Activated CD4-positive, alpha-beta memory T cell treated with anti-CD3 and anti-CD28 coated beads for 36 hours (primary cell): ENCODE measurements at regions of chr17 and their contacts with region 1.

Region 1: DNA sequence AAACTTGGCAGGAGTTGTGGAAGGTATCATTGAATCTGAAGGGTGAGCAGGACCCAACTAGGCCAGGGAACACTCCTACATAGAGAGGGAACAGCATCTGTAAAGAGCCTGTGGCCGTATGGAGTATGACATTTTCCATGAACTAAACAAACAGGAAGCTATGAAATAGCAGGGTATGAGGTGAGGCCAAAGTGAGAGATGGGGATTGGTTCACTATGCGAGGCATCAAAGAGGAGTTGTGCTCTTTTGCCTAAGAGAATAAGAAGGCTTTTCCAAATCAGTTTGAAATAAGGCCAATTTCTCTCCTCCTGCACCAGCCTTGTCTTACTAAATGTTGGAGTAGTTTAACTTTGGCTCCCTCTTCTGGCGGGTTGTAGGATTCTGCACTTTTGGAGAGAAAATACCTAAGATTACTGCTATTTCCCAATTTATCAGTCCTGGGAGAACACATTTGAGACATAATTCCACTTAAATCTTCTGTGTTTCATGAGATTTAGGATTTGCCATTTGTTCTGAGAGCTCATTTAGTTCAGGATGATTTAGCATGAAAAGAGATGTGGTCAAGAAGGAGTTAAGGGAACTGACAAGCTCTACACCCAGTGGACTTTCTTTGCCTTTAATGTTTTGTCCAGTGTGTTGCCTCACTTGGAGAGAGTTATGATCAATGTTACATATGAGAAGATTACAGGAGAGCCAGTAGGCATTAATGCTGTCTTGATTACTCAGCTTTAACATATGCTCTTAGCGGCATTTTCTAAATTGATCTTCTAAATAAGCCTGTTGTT is 55.4 kb downstream of the TNRC6C start:
- DNase-seq: peak; percentile 50
- H3K4me3 Mint-ChIP-seq: no peak overlapping the region
- H3K27ac Mint-ChIP-seq: no peak overlapping the region
- H3K4me1 Mint-ChIP-seq: peaks cover 20% of the 10 kb centered on the region
- H3K27me3 Mint-ChIP-seq: no peaks in the 10 kb centered on the region

Region 2: GRCh38 chr17:77420804-77421629 is 592.9 kb before region 1 on chr17:
- CTCF ChIA-PET with region 1: no interaction called
- POLR2A ChIA-PET with region 1: no interaction called
- intact Hi-C with region 1: no loop called
- DNase-seq: peak; percentile 65
- H3K4me3 Mint-ChIP-seq: peak overlapping the region; percentile 49
- H3K27ac Mint-ChIP-seq: peak overlapping the region; percentile 69
- H3K4me1 Mint-ChIP-seq: peaks cover 48% of the 10 kb centered on the region
- H3K27me3 Mint-ChIP-seq: no peaks in the 10 kb centered on the region

Region 3: DNA sequence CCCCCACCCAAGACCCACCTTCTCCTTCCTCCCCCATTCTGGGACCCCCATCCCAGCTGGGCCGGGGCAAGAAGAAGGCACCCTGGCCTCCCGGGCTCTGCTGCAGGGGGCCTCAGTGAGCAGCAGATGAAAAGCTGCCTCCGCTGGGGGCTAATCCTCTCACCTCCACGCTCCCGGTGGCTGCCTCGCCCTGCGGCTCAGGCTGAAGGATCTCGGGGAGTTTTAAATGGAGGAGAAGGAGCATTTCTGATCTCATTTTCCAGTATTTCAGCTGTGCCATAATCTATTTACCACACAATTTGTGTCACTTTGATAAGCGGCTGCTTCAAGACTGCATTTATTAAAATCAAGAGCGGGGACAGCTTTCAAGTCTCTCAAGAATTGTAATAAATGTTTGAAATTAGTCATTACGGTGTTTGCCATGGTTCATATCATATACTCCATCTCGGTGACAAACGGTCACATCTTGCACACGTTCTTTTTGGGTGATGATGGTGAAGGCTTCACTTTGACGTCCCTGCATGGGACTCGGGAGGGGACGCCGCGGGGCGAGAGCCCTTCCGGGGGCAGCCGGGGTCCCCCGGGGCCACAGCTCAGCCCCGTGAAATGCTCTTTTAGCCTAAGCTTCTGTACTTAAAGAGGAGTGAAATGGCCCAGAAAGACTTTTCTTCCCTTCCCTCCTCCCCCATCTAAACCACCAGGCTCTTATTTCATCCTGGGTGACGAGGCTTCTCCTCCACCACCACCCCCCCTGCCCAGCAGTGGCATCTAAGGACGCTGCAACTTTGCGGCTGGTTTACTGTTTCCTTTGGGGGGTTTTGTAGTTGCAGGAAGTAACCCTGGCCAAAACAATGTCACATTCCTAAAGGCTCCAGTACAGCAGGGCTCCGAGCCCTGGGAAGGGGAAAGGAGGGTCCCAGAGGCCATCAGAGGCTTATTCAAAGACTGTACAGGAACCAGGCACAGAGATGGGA is 368.5 kb before region 1 on chr17:
- CTCF ChIA-PET with region 1: interaction called, 10 read pairs
- POLR2A ChIA-PET with region 1: no interaction called
- intact Hi-C with region 1: loop called (anchors 10 kb)
- DNase-seq: peak; percentile 85
- H3K4me3 Mint-ChIP-seq: peak overlapping the region; percentile 68
- H3K27ac Mint-ChIP-seq: peak overlapping the region; percentile 84
- H3K4me1 Mint-ChIP-seq: peaks cover 26% of the 10 kb centered on the region
- H3K27me3 Mint-ChIP-seq: no peaks in the 10 kb centered on the region

Region 4: GRCh38 chr17:77783991-77784820 is 229.7 kb before region 1 on chr17:
- CTCF ChIA-PET with region 1: interaction called, 18 read pairs
- POLR2A ChIA-PET with region 1: no interaction called
- intact Hi-C with region 1: no loop called
- DNase-seq: peak; percentile 86
- H3K4me3 Mint-ChIP-seq: peak overlapping the region; percentile 44
- H3K27ac Mint-ChIP-seq: peak overlapping the region; percentile 84
- H3K4me1 Mint-ChIP-seq: peaks cover 24% of the 10 kb centered on the region
- H3K27me3 Mint-ChIP-seq: no peaks in the 10 kb centered on the region

Region 5: DNA sequence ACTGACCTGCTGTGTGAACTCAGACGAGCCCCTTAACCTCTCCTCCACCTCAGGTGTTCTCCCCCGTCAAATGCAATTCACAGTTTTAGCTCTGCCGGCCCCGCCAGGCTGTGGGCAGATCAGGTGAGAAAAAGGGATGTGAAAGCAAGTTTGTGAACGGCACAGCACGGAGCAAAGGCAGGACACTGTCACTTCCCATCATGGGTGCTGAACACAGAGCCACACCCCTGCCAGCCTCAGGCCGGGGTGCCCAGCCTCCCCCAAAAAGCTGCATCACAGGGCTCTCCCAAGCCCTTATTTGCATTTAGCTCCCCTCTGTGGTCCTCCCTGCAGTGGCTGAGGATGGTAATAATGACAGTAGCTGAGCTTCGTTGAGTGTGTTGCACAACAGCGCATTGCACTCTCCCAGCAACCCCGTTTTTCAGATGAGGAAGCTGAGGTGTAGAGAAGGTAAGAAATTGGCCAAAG is 144.2 kb before region 1 on chr17:
- CTCF ChIA-PET with region 1: no interaction called
- POLR2A ChIA-PET with region 1: no interaction called
- intact Hi-C with region 1: no loop called
- DNase-seq: peak; percentile 37
- H3K4me3 Mint-ChIP-seq: no peak overlapping the region
- H3K27ac Mint-ChIP-seq: no peak overlapping the region
- H3K4me1 Mint-ChIP-seq: peaks cover 44% of the 10 kb centered on the region
- H3K27me3 Mint-ChIP-seq: no peaks in the 10 kb centered on the region

Region 6: GRCh38 chr17:77914385-77915254 is 99.3 kb before region 1 on chr17:
- CTCF ChIA-PET with region 1: interaction called, 5 read pairs
- POLR2A ChIA-PET with region 1: interaction called, 3 read pairs
- intact Hi-C with region 1: loop called (anchors 5 kb)
- DNase-seq: no peak
- H3K4me3 Mint-ChIP-seq: no peak overlapping the region
- H3K27ac Mint-ChIP-seq: no peak overlapping the region
- H3K4me1 Mint-ChIP-seq: peaks cover 13% of the 10 kb centered on the region
- H3K27me3 Mint-ChIP-seq: peaks cover 34% of the 10 kb centered on the region

Region 7: DNA sequence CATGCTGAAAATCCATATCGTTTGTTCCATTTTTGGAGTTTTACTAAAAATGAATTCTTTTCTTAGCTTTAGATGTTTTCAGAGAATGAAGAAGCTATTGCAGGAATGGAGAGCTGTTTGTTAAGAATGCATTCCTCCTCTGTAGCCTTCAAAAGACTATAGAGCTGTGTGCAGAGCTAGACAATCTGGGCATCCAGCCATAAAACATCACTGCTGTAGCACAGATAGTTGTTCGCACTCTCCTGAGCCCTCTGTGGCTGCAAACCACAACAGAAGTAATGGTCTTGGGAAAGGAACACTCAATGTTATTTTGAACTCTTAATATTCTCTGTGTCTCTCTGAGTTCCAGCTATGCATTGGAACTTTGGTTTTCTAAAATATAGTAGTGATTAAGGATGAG is 50.4 kb before region 1 on chr17:
- CTCF ChIA-PET with region 1: interaction called, 15 read pairs
- POLR2A ChIA-PET with region 1: interaction called, 9 read pairs
- intact Hi-C with region 1: loop called (anchors 5 kb)
- DNase-seq: peak; percentile 34
- H3K4me3 Mint-ChIP-seq: peak overlapping the region; percentile 4
- H3K27ac Mint-ChIP-seq: no peak overlapping the region
- H3K4me1 Mint-ChIP-seq: peaks cover 63% of the 10 kb centered on the region
- H3K27me3 Mint-ChIP-seq: no peaks in the 10 kb centered on the region